ENCODE measurements at regions of chr12 and their contacts with region 1.

Region 1: GRCh38 chr12:76083904-76084862 is at the start of gene NAP1L1:
- DNase-seq: peak; percentile 94
- ATAC-seq: peak; percentile 89
- H3K4me3 ChIP-seq: peak within 1 kb of the TSS; percentile 73 to 88 (median 74)
- H3K27ac ChIP-seq: peak within 1 kb of the TSS; percentile 95
- H3K4me1 ChIP-seq: peaks cover 56% of the 10 kb centered on the region
- H3K27me3 ChIP-seq: no peaks in the 10 kb centered on the region
- CTCF ChIP-seq: no peak
- EP300 ChIP-seq: no peak
- POLR2A ChIP-seq: peak; percentile 85 to 88
- RAD21 ChIP-seq: 0 out of 2 replicates have a peak, but pooled peaks have one; percentile 3
- total RNA-seq, gene NAP1L1: 309 and 454 TPM in 2 replicates

Region 2: DNA sequence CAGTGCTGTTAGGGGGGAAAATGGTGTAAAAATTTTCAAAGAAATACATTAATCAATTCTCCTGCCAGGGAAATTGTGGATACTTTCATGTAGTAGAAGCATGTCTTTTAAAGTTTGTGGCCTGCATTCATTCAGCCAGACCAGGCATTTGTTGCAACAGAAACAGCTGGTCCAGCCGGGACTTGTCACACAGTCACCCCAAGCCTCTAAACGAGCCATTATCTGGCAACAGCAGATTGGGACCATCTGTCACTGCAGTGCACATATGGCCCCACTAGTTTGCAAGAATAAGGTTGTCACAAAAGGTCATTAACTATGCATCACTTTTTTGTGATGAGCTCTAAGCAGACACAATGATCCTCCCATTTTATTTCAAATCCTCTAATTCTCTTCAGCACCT is 246.5 kb before region 1 on chr12:
- CTCF ChIA-PET with region 1: no interaction called
- POLR2A ChIA-PET with region 1: no interaction called
- in situ Hi-C with region 1: no loop called
- intact Hi-C with region 1: no loop called
- DNase-seq: no peak
- ATAC-seq: no peak
- H3K4me3 ChIP-seq: no peak overlapping the region
- H3K27ac ChIP-seq: no peak overlapping the region
- H3K4me1 ChIP-seq: peaks cover 15% of the 10 kb centered on the region; the same call in 1 of the 2 replicates
- H3K27me3 ChIP-seq: no peaks in the 10 kb centered on the region
- CTCF ChIP-seq: no peak
- EP300 ChIP-seq: no peak
- POLR2A ChIP-seq: no peak
- RAD21 ChIP-seq: no peak

Region 3: GRCh38 chr12:76158518-76159321 is 74.5 kb after region 1 on chr12:
- CTCF ChIA-PET with region 1: no interaction called
- POLR2A ChIA-PET with region 1: no interaction called
- in situ Hi-C with region 1: no loop called
- intact Hi-C with region 1: loop called (anchors 5 kb)
- DNase-seq: peak; percentile 53
- ATAC-seq: peak; percentile 100
- H3K4me3 ChIP-seq: peak overlapping the region in 1 of 3 experiments; percentile 39; a peak in 1 of 6 replicates
- H3K27ac ChIP-seq: no peak overlapping the region
- H3K4me1 ChIP-seq: 0 out of 2 replicates have a peak, but pooled peaks cover 4% of the 10 kb centered on the region
- H3K27me3 ChIP-seq: no peaks in the 10 kb centered on the region; a peak in 1 of 5 replicates
- CTCF ChIP-seq: peak; percentile 85
- EP300 ChIP-seq: no peak
- POLR2A ChIP-seq: no peak
- RAD21 ChIP-seq: no peak; the same call in 1 of the 2 replicates

Region 4: DNA sequence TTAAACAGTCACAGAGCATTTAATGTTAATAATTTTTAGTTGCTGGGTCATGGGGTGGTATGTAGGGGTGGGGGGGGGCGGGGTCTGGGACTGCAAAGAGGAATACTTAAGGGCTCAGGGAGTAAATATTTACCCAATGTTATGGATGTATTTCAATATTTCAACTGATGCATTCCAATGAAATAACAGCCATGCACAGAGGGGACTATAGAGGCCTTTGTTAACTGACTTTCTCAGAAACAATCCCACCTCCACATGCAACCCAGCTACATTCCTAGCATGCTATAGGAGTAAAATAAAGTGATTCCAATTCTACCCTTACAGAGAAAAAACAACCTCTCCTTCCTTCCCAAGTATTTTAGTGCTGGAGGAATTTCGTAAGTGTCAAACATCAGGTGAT is 271.9 kb after region 1 on chr12:
- CTCF ChIA-PET with region 1: no interaction called
- POLR2A ChIA-PET with region 1: no interaction called
- in situ Hi-C with region 1: no loop called
- intact Hi-C with region 1: no loop called
- DNase-seq: peak; percentile 7
- ATAC-seq: no peak
- H3K4me3 ChIP-seq: no peak overlapping the region
- H3K27ac ChIP-seq: no peak overlapping the region
- H3K4me1 ChIP-seq: no peaks in the 10 kb centered on the region
- H3K27me3 ChIP-seq: no peaks in the 10 kb centered on the region; a peak in 1 of 5 replicates
- CTCF ChIP-seq: no peak
- EP300 ChIP-seq: no peak
- POLR2A ChIP-seq: no peak
- RAD21 ChIP-seq: no peak

Region 5: GRCh38 chr12:76462668-76463224 is 378.6 kb after region 1 on chr12:
- CTCF ChIA-PET with region 1: no interaction called
- POLR2A ChIA-PET with region 1: no interaction called
- in situ Hi-C with region 1: no loop called
- intact Hi-C with region 1: loop called (anchors 10 kb)
- DNase-seq: peak; percentile 16
- ATAC-seq: peak; percentile 25; the same call in 2 of the 3 replicates
- H3K4me3 ChIP-seq: no peak overlapping the region
- H3K27ac ChIP-seq: no peak overlapping the region
- H3K4me1 ChIP-seq: peaks cover 8% of the 10 kb centered on the region; the same call in 1 of the 2 replicates
- H3K27me3 ChIP-seq: no peaks in the 10 kb centered on the region
- CTCF ChIP-seq: no peak
- EP300 ChIP-seq: no peak
- POLR2A ChIP-seq: no peak
- RAD21 ChIP-seq: no peak